CD8-positive, alpha-beta T cell (primary cell): ENCODE measurements at regions of chr20 and their contacts with region 1.

Region 1: GRCh38 chr20:2688041-2688591 is 4.5 kb upstream of the EBF4 start:
- DNase-seq: peak; percentile 58 to 91 (median 83)
- ATAC-seq: peak; percentile 94
- H3K4me3 ChIP-seq: no peak overlapping the region
- H3K4me3 Mint-ChIP-seq: peak overlapping the region; percentile 37
- H3K27ac ChIP-seq: peak overlapping the region in 1 of 2 experiments; percentile 23
- H3K27ac Mint-ChIP-seq: no peak overlapping the region
- H3K4me1 ChIP-seq: peaks cover 20% of the 10 kb centered on the region
- H3K4me1 Mint-ChIP-seq: peaks cover 27% of the 10 kb centered on the region
- H3K27me3 ChIP-seq: no peaks in the 10 kb centered on the region
- H3K27me3 Mint-ChIP-seq: peaks cover 11% of the 10 kb centered on the region
- CTCF ChIP-seq: peak; percentile 91

Region 2: GRCh38 chr20:2421247-2421646 is 266.9 kb before region 1 on chr20:
- CTCF ChIA-PET with region 1: no interaction called
- POLR2A ChIA-PET with region 1: no interaction called
- intact Hi-C with region 1: no loop called
- DNase-seq: no peak
- ATAC-seq: no peak
- H3K4me3 ChIP-seq: no peak overlapping the region
- H3K4me3 Mint-ChIP-seq: no peak overlapping the region
- H3K27ac ChIP-seq: no peak overlapping the region
- H3K27ac Mint-ChIP-seq: no peak overlapping the region
- H3K4me1 ChIP-seq: no peaks in the 10 kb centered on the region
- H3K4me1 Mint-ChIP-seq: no peaks in the 10 kb centered on the region
- H3K27me3 ChIP-seq: no peaks in the 10 kb centered on the region
- H3K27me3 Mint-ChIP-seq: peaks cover 16% of the 10 kb centered on the region
- CTCF ChIP-seq: no peak

Region 3: GRCh38 chr20:2729251-2729713 is 41.2 kb after region 1 on chr20:
- CTCF ChIA-PET with region 1: interaction called, 18 read pairs
- POLR2A ChIA-PET with region 1: no interaction called
- intact Hi-C with region 1: no loop called
- DNase-seq: peak in 7 of 9 experiments; percentile 30 to 80 (median 57)
- ATAC-seq: peak; percentile 96
- H3K4me3 ChIP-seq: peak overlapping the region in 1 of 2 experiments; percentile 41
- H3K4me3 Mint-ChIP-seq: peak overlapping the region; percentile 49
- H3K27ac ChIP-seq: peak overlapping the region; percentile 46 to 75
- H3K27ac Mint-ChIP-seq: peak overlapping the region; percentile 88
- H3K4me1 ChIP-seq: peaks cover 28% of the 10 kb centered on the region
- H3K4me1 Mint-ChIP-seq: peaks cover 27% of the 10 kb centered on the region
- H3K27me3 ChIP-seq: no peaks in the 10 kb centered on the region
- H3K27me3 Mint-ChIP-seq: peaks cover 2% of the 10 kb centered on the region
- CTCF ChIP-seq: no peak

Region 4: GRCh38 chr20:2742934-2743559 is 54.9 kb after region 1 on chr20:
- CTCF ChIA-PET with region 1: interaction called, 32 read pairs
- POLR2A ChIA-PET with region 1: interaction called, 4 read pairs
- intact Hi-C with region 1: loop called (anchors 1 kb)
- DNase-seq: peak; percentile 46 to 89 (median 75)
- ATAC-seq: peak; percentile 62
- H3K4me3 ChIP-seq: peak overlapping the region in 1 of 2 experiments; percentile 0
- H3K4me3 Mint-ChIP-seq: peak overlapping the region; percentile 65
- H3K27ac ChIP-seq: peak overlapping the region in 1 of 2 experiments; percentile 80
- H3K27ac Mint-ChIP-seq: peak overlapping the region; percentile 79
- H3K4me1 ChIP-seq: peaks cover 46% of the 10 kb centered on the region
- H3K4me1 Mint-ChIP-seq: peaks cover 47% of the 10 kb centered on the region
- H3K27me3 ChIP-seq: no peaks in the 10 kb centered on the region
- H3K27me3 Mint-ChIP-seq: no peaks in the 10 kb centered on the region
- CTCF ChIP-seq: peak; percentile 86

Region 5: DNA sequence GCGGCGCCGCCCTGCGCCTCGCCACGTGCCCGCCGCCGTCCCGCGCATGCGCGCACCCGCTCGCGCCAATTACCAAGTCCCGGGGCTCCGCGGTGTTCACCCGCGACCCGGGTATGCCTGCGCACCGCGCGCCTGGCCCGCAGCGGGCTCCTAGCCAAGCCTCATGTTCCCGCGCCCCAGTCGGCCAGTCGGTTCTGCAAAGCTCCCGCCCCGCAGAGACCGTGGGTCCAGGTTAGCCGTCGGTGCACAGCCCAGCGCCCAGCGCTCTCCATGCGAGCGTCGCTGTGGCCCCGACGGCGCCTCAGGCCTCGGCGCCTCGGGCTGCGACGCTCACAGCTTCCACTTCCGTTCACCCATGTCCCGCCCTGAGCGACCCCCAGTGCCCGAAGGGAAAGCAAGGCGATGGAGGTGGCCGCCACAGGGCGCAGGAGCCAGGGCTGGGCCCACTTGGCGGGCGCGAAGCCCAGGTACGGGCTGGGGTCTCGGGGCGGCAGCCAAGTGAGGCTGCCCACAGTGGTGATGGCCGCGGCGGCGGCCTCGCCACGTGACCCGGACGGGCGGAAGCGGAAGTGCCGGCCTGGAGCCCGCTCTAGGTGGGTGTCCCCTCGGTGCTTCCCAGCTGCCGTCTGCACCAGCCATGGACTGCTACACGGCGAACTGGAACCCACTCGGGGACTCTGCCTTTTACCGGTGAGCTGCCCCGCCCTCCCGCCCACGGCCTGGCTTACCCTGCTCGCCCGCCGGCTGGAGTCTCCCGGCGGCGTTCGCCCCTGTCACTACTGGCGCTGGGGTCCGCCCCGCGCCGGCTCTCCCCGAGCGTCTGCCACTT is 152.2 kb after region 1 on chr20 and contains the starts of genes PCED1A and VPS16:
- CTCF ChIA-PET with region 1: interaction called, 3 read pairs
- POLR2A ChIA-PET with region 1: interaction called, 5 read pairs
- intact Hi-C with region 1: loop called in 1 of 2 experiments (anchors 5 kb)
- DNase-seq: peak; percentile 78 to 95 (median 89)
- ATAC-seq: peak; percentile 92
- H3K4me3 ChIP-seq: peak within 1 kb of the TSS; percentile 88 to 97
- H3K4me3 Mint-ChIP-seq: peak within 1 kb of the TSS; percentile 82
- H3K27ac ChIP-seq: peak within 1 kb of the TSS; percentile 85 to 88
- H3K27ac Mint-ChIP-seq: peak within 1 kb of the TSS; percentile 89
- H3K4me1 ChIP-seq: peaks cover 22% of the 10 kb centered on the region
- H3K4me1 Mint-ChIP-seq: peaks cover 41% of the 10 kb centered on the region
- H3K27me3 ChIP-seq: no peaks in the 10 kb centered on the region
- H3K27me3 Mint-ChIP-seq: no peaks in the 10 kb centered on the region
- CTCF ChIP-seq: no peak
- total RNA-seq, gene PCED1A: 58.7 to 62.2 TPM
- total RNA-seq, gene VPS16: 40.7 to 41.1 TPM

Region 6: DNA sequence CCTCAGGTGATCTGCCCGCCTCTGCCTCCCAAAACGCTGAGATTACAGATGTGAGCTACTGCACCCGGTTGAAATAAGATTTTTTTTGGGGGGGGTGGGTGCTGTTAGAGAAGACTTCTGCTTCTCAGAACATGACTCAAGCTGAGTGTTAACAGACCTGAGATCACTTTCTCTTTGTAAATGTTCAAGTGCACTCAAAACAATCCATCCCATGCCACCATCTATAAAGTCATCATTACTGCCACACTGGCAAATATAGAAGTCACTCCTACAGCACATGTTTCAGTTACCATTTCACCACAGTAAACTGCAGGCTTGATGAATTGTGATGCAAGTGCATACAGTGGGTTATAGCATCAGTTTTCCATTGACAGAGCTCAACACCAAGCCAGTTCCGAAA is 161.4 kb after region 1 on chr20:
- CTCF ChIA-PET with region 1: interaction called, 3 read pairs
- POLR2A ChIA-PET with region 1: no interaction called
- intact Hi-C with region 1: loop called (anchors 1 kb)
- DNase-seq: no peak
- ATAC-seq: no peak
- H3K4me3 ChIP-seq: no peak overlapping the region
- H3K4me3 Mint-ChIP-seq: no peak overlapping the region
- H3K27ac ChIP-seq: no peak overlapping the region
- H3K27ac Mint-ChIP-seq: no peak overlapping the region
- H3K4me1 ChIP-seq: peaks cover 18% of the 10 kb centered on the region
- H3K4me1 Mint-ChIP-seq: peaks cover 35% of the 10 kb centered on the region
- H3K27me3 ChIP-seq: no peaks in the 10 kb centered on the region
- H3K27me3 Mint-ChIP-seq: no peaks in the 10 kb centered on the region
- CTCF ChIP-seq: no peak

Region 7: DNA sequence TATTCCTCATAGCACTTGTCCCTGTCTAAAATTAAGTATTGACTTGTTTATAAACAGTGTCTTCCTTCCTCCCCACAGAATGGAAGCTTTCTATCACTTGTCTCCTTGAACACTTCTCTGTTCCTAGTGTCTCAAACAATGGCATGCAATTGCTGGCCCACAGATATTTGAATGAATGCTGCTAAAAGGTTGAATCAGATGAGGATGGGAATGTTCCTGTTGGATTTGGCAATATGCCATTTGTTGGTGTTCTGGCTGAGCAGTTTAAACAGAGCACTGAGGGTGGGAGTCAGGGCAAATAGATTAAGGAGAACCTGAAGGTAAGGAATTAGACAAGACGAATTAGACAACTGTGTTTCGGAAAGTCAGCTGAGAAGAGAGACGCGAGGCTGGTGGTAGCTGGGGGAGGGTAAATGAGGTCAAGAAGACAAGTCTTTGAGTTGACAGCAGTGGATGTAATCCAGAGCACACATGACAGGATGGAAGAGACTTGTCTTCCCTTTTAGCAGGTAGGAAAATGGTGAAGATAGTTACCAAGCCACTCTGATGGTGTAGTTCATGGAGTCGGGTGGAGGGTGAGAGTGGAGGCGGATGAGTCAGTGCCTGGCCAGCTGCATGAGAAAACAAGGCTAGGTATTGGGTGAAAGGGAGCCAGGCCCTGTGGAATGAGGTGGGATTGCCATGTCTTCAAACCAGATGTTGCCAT is 297.0 kb after region 1 on chr20:
- CTCF ChIA-PET with region 1: interaction called, 3 read pairs
- POLR2A ChIA-PET with region 1: no interaction called
- intact Hi-C with region 1: loop called (anchors 1 to 5 kb)
- DNase-seq: no peak
- ATAC-seq: no peak
- H3K4me3 ChIP-seq: no peak overlapping the region
- H3K4me3 Mint-ChIP-seq: no peak overlapping the region
- H3K27ac ChIP-seq: peak overlapping the region in 1 of 2 experiments; percentile 80
- H3K27ac Mint-ChIP-seq: no peak overlapping the region
- H3K4me1 ChIP-seq: no peaks in the 10 kb centered on the region
- H3K4me1 Mint-ChIP-seq: peaks cover 4% of the 10 kb centered on the region
- H3K27me3 ChIP-seq: no peaks in the 10 kb centered on the region
- H3K27me3 Mint-ChIP-seq: no peaks in the 10 kb centered on the region
- CTCF ChIP-seq: no peak